ENCODE measurements at regions of chrX and their contacts with region 1.

Region 1: DNA sequence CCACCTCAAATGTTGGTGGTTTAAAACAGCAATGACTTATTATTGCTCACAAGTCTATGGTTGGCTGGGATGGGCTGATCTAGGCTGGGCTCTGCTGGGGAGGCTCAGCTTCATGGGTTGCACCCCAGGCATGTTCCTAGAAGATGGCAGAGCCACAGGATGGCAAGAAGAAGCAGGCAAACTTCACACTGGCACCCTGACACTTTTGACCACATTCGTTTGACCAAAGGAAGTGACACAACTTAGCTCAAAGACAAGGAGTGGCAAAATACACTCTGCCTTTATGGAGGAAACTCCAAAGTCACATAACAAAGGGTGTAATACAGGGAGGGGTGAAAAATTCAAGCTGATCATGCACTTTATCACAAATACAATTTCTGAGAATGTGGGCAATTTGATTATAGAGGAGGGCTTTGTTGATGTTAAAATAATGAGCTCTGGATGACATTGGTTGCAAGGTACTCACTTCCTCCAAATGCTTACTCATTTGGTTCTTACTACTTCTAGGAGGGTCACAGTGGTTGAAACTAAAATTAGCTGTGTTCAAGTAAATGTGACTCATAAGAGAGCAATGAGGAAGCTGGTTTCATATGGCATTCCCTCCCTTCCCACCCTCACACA is 249.2 kb upstream of the RPS6KA3 start:
- DNase-seq: peak; percentile 55
- ATAC-seq: peak; percentile 86
- H3K4me3 Mint-ChIP-seq: no peak overlapping the region
- H3K27ac Mint-ChIP-seq: peak overlapping the region; percentile 88
- H3K4me1 Mint-ChIP-seq: peaks cover 47% of the 10 kb centered on the region
- H3K27me3 Mint-ChIP-seq: peaks cover 8% of the 10 kb centered on the region
- CTCF ChIP-seq: no peak

Region 2: DNA sequence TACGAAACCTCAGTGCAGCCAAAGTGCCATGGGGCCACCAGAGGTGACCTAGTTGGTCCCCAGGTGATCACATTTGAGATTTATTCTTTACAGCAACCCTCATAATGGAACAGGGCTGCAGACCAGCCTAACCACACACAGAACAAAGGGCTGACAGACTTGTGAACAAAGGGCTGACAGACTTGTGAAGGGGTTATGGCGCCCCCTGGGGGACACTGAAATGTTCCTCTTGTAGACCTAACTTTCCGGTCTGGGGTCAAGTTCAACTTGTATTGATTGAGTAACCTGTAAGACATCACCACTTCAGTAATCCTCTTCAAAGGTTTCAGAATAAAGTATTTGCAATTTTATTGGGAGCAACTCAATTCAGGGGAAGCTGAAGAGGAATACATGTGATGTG is 73.4 kb before region 1 on chrX:
- CTCF ChIA-PET with region 1: no interaction called
- POLR2A ChIA-PET with region 1: no interaction called
- intact Hi-C with region 1: loop called (anchors 5 kb)
- DNase-seq: peak; percentile 95
- ATAC-seq: peak; percentile 74
- H3K4me3 Mint-ChIP-seq: no peak overlapping the region
- H3K27ac Mint-ChIP-seq: no peak overlapping the region
- H3K4me1 Mint-ChIP-seq: peaks cover 70% of the 10 kb centered on the region
- H3K27me3 Mint-ChIP-seq: no peaks in the 10 kb centered on the region
- CTCF ChIP-seq: peak; percentile 54

Region 3: DNA sequence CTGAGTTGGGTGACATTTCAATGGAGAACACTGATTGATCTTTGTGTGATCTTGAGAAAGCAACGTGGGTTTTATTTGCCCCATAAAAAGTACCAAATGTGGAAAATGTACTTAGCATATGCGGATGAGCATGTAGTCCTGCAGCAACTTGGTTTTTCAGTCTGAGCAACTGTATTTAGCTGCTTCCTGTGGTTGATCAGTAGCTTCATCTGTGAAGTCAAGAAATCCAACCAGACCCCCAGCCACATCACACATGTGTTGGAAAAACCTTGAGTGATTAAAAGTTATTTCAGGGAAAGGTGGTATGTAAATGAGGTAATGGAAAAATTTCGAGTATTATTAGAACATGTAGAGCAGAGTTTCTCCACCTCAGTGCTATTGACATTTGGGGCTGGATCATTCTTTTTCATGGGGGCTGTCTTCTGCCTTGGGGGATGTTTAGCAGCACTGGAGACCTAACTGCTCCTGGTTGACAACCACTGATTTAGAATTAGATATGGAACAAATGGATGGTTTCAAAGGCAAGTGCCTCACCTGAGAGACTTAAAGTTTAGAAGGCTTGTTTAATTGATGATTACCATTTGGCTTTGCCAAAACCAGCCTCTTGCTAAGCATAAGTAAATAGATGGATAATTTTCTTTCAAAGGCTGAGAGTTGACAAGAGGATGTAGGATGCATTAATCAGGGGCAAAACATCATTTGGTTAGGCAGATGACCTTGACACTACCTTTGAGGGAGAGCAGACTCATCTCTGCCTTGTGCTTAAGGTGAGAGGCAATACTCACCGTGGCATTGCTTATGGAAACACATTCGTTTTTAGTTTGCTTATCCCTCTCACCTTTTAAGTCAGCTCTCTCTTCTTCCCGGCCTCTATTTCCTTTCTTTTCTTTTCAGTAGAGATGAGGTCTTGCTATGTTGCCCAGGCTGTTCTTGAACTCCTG is 56.3 kb before region 1 on chrX:
- CTCF ChIA-PET with region 1: no interaction called
- POLR2A ChIA-PET with region 1: no interaction called
- intact Hi-C with region 1: loop called (anchors 2 kb)
- DNase-seq: peak; percentile 64
- ATAC-seq: peak; percentile 75
- H3K4me3 Mint-ChIP-seq: no peak overlapping the region
- H3K27ac Mint-ChIP-seq: peak overlapping the region; percentile 69
- H3K4me1 Mint-ChIP-seq: peaks cover 43% of the 10 kb centered on the region
- H3K27me3 Mint-ChIP-seq: no peaks in the 10 kb centered on the region
- CTCF ChIP-seq: no peak

Region 4: DNA sequence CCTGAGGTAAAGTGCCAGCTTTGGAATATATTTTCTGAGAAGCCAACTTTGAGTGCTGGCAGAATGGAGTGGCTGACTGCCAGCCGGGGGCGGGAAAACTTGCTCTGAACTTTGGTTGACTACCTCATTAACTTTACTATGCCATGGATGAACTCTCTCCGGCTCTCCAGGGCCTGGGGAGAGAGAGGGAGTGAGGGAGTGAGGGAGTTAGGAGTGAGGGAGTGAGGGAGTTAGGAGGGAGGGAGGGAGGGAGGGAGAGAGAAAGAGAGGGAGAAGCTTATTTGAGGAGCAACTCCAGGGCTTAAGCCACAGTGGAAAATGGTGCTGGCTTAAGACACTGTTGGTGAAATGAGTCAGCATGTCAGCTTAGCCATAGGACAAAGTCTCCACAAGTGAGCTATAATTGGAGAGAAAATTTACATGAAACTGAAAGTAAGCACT is 31.7 kb after region 1 on chrX:
- CTCF ChIA-PET with region 1: no interaction called
- POLR2A ChIA-PET with region 1: no interaction called
- intact Hi-C with region 1: no loop called
- DNase-seq: peak; percentile 11
- ATAC-seq: no peak
- H3K4me3 Mint-ChIP-seq: no peak overlapping the region
- H3K27ac Mint-ChIP-seq: no peak overlapping the region
- H3K4me1 Mint-ChIP-seq: peaks cover 2% of the 10 kb centered on the region
- H3K27me3 Mint-ChIP-seq: no peaks in the 10 kb centered on the region
- CTCF ChIP-seq: no peak

Region 5: GRCh38 chrX:20641954-20642353 is 126.0 kb after region 1 on chrX:
- CTCF ChIA-PET with region 1: no interaction called
- POLR2A ChIA-PET with region 1: no interaction called
- intact Hi-C with region 1: no loop called
- DNase-seq: no peak
- ATAC-seq: no peak
- H3K4me3 Mint-ChIP-seq: no peak overlapping the region
- H3K27ac Mint-ChIP-seq: no peak overlapping the region
- H3K4me1 Mint-ChIP-seq: no peaks in the 10 kb centered on the region
- H3K27me3 Mint-ChIP-seq: no peaks in the 10 kb centered on the region
- CTCF ChIP-seq: no peak

Measured in activated CD8-positive, alpha-beta T cell treated with anti-CD3 and anti-CD28 coated beads for 36 hours (primary cell).